Adrenal gland (tissue), 19 donors: ENCODE measurements at regions of chr6 and their contacts with region 1.

Region 1: GRCh38 chr6:79713701-79714322 is 82.7 kb downstream of the SH3BGRL2 start:
- DNase-seq: peak; percentile 23 to 67 (median 53)
- H3K4me3 ChIP-seq: no peak overlapping the region
- H3K27ac ChIP-seq: no peak overlapping the region
- H3K4me1 ChIP-seq: no peaks in the 10 kb centered on the region
- H3K27me3 ChIP-seq: peaks cover 3% of the 10 kb centered on the region
- CTCF ChIP-seq: peak; percentile 26 to 73 (median 58)
- POLR2A ChIP-seq: no peak

Region 2: DNA sequence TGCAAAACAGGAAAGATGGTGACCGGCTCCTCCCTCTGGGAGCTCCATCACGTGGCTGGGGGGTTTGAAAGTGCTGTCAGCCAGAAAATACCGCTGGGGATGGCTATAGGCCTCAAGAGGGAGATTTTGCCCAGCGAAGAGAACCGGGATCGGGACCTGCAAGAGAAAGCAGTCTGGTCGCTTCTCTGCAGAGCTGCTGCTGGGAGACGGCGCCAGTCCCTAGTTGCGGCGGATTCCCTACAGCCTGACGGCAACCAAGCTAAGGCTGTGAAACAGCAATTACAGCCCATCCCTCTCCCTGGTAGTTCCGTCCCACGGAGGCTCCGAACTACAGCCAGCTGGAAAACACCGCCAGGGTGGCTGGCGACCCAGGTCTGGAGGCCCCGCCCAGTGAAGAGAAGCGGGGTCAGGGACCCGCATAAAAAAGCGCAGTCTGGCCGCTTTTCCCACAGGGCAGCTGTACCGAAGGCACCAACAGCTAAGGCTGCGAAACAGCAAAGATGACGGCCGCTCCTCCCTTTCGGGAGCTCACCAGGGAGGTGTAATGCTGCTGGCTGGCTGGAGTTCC is 1084.6 kb before region 1 on chr6:
- intact Hi-C with region 1: no loop called
- DNase-seq: peak in 6 of 7 donors; percentile 1 to 55 (median 20)
- H3K4me3 ChIP-seq: peak overlapping the region in 2 of 4 donors; percentile 29 to 50
- H3K27ac ChIP-seq: no peak overlapping the region
- H3K4me1 ChIP-seq: no peaks in the 10 kb centered on the region
- H3K27me3 ChIP-seq: no peaks in the 10 kb centered on the region
- CTCF ChIP-seq: no peak
- POLR2A ChIP-seq: no peak

Region 3: DNA sequence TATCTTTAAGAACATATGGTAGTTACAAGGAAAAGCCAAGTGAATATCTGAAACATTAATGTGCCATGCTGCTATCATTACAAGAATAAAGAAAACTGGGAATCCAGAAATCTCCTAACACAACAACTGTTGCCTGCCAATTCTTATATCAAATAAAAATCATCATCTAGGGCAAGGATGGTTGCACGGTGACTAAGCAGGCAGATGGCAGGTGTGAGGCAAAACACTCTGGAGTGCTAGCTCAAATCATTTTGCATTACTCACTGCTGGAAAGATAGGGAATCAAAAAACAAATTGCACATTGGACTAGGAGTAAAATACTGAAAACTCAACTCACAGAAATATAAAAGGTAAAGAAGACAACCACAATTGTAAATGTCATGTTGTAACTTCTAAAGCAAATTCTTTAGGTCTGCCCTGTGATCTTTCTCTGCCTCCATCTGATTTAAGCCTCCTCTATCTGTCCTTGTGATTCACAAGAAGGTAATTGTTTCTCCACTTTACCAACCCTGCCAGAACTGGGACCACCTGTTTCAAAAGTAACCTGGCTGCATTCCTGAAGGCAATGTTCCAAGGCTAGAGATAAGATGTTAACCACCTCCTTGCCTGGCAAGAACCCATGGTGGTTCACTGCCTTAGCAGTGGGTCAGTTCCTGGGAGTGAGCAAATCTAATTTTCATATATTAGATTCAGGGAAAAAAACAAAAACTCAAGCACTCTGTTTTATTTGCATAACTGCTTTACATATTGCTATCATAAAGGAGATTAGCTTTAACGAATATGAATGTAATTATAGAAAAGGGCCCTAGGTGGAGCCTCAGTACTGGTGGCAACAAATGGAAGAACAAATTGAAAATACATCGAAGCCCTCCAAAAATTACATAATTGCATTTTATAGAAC is 143.4 kb before region 1 on chr6:
- intact Hi-C with region 1: loop called in 1 of 2 experiments (anchors 10 kb)
- DNase-seq: peak in 6 of 7 donors; percentile 19 to 62 (median 30)
- H3K4me3 ChIP-seq: peak overlapping the region in 1 of 4 donors; percentile 37
- H3K27ac ChIP-seq: no peak overlapping the region
- H3K4me1 ChIP-seq: peaks cover 0 to 8% of the 10 kb centered on the region in 2 donors
- H3K27me3 ChIP-seq: no peaks in the 10 kb centered on the region
- CTCF ChIP-seq: peak; percentile 43 to 72 (median 60)
- POLR2A ChIP-seq: no peak

Region 4: GRCh38 chr6:79878142-79878753 is 164.4 kb after region 1 on chr6:
- intact Hi-C with region 1: no loop called
- DNase-seq: peak in 3 of 7 donors; percentile 13 to 73 (median 32)
- H3K4me3 ChIP-seq: no peak overlapping the region
- H3K27ac ChIP-seq: no peak overlapping the region
- H3K4me1 ChIP-seq: no peaks in the 10 kb centered on the region
- H3K27me3 ChIP-seq: no peaks in the 10 kb centered on the region
- CTCF ChIP-seq: no peak
- POLR2A ChIP-seq: no peak